ENCODE measurements at regions of chr19 and their contacts with region 1.

Region 1: GRCh38 chr19:15779756-15780476 is 7.5 kb upstream of the OR10H5 start:
- DNase-seq: no peak
- H3K4me3 ChIP-seq: no peak overlapping the region
- H3K4me1 ChIP-seq: no peaks in the 10 kb centered on the region
- H3K27me3 ChIP-seq: no peaks in the 10 kb centered on the region

Region 2: GRCh38 chr19:15675560-15675959 is 104.4 kb before region 1 on chr19:
- in situ Hi-C with region 1: loop called (anchors 5 kb)
- DNase-seq: no peak
- H3K4me3 ChIP-seq: no peak overlapping the region
- H3K4me1 ChIP-seq: no peaks in the 10 kb centered on the region
- H3K27me3 ChIP-seq: no peaks in the 10 kb centered on the region

Region 3: DNA sequence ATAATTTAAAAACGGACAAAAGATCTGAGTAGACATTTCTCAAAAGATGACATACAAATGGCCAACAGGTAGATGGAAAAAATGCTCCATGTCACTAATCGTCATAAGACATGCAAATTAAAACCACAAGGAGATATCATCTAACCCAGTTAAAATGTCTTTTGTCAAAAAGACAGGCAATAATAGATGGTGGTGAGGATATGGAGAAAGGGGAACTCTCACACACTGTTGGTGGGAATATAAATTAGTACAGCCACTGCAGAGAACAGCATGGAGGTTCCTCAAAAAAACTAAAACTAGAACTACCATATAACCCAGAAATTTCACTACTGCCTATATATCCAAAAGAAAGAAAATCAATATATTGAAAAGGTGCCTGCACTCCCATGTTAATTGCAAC is 206.8 kb after region 1 on chr19:
- in situ Hi-C with region 1: no loop called
- DNase-seq: no peak
- H3K4me3 ChIP-seq: no peak overlapping the region
- H3K4me1 ChIP-seq: no peaks in the 10 kb centered on the region
- H3K27me3 ChIP-seq: no peaks in the 10 kb centered on the region